MCF 10A (cell line): ENCODE measurements at regions of chr10 and their contacts with region 1.

Region 1: DNA sequence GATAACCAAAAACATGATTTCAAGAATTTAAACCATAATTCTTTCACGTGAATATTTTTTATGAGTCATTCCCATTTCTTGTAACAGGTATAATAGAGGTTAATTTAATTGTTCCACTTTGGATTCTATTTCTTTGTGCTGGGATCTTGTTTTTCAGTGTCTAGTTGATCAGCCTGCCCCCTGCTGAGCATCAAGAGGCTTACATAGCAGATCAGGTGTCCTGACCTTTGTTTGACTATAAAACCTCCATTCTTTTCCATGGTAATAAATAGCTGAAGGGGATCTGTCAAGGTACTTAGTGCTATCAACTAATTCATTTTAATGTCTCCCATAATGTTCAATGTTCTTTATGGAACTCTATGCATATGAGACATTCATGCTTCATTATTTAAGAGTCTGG is 4.9 kb downstream of the COL17A1 start:
- DNase-seq: peak; percentile 65
- H3K4me3 Mint-ChIP-seq: peak overlapping the region; percentile 83
- H3K27ac Mint-ChIP-seq: no peak overlapping the region
- H3K4me1 Mint-ChIP-seq: peaks cover 24% of the 10 kb centered on the region
- H3K27me3 Mint-ChIP-seq: no peaks in the 10 kb centered on the region
- CTCF ChIP-seq: peak; percentile 45

Region 2: DNA sequence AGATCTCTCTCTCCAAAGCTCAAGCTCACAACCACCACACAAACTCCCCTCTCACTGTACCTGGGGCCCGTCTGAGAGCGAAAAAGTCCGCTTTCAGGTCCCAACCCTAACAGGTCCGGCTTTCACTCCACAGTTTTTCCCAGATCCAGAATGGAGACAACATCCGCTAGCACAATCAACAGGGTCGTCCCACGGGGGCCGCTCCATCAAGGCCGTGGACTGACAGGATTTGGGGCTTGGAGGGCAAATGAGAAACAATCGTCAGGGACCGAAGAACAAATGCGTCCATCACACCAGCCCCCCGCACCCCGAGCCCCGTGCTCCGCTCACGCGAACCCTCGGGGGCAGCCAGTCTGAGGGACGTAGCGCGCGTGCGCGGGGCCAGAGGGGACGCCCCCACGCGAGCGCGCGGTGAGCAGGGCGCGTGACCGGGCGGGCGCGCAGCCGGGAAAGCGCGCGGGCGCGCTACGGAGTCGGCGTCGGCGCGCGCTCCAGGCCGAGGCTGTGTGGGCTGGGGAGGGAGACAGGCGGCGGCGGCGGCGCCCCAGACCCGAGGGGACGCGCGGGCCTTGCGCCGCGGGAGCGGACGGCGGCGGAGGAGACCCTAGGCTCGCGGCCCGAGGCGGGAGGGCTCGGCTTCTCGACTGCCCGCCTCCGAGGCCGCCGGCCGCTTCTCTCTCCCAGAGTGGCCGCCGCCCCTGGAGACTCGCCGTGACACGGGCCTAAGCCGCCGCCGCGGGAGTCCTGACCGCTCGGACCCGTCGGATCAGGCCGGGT is 113.9 kb before region 1 on chr10 and contains the start of gene SLK:
- CTCF ChIA-PET with region 1: no interaction called
- POLR2A ChIA-PET with region 1: interaction called, 35 read pairs
- intact Hi-C with region 1: no loop called
- DNase-seq: peak; percentile 75
- H3K4me3 Mint-ChIP-seq: peak within 1 kb of the TSS; percentile 89
- H3K27ac Mint-ChIP-seq: peak within 1 kb of the TSS; percentile 96
- H3K4me1 Mint-ChIP-seq: no peaks in the 10 kb centered on the region
- H3K27me3 Mint-ChIP-seq: no peaks in the 10 kb centered on the region
- CTCF ChIP-seq: no peak
- total RNA-seq, gene SLK: 57.3 and 71.9 TPM in 2 replicates

Region 3: GRCh38 chr10:104054430-104054829 is 26.3 kb before region 1 on chr10:
- CTCF ChIA-PET with region 1: interaction called, 6 read pairs
- POLR2A ChIA-PET with region 1: interaction called, 29 read pairs
- intact Hi-C with region 1: loop called (anchors 5 kb)
- DNase-seq: peak; percentile 73
- H3K4me3 Mint-ChIP-seq: no peak overlapping the region
- H3K27ac Mint-ChIP-seq: peak overlapping the region; percentile 84
- H3K4me1 Mint-ChIP-seq: peaks cover 37% of the 10 kb centered on the region
- H3K27me3 Mint-ChIP-seq: no peaks in the 10 kb centered on the region
- CTCF ChIP-seq: no peak

Region 4: GRCh38 chr10:104092749-104093148 is 12.0 kb after region 1 on chr10:
- CTCF ChIA-PET with region 1: interaction called, 6 read pairs
- POLR2A ChIA-PET with region 1: interaction called, 26 read pairs
- intact Hi-C with region 1: no loop called
- DNase-seq: no peak
- H3K4me3 Mint-ChIP-seq: no peak overlapping the region
- H3K27ac Mint-ChIP-seq: no peak overlapping the region
- H3K4me1 Mint-ChIP-seq: peaks cover 14% of the 10 kb centered on the region
- H3K27me3 Mint-ChIP-seq: no peaks in the 10 kb centered on the region
- CTCF ChIP-seq: no peak

Region 5: DNA sequence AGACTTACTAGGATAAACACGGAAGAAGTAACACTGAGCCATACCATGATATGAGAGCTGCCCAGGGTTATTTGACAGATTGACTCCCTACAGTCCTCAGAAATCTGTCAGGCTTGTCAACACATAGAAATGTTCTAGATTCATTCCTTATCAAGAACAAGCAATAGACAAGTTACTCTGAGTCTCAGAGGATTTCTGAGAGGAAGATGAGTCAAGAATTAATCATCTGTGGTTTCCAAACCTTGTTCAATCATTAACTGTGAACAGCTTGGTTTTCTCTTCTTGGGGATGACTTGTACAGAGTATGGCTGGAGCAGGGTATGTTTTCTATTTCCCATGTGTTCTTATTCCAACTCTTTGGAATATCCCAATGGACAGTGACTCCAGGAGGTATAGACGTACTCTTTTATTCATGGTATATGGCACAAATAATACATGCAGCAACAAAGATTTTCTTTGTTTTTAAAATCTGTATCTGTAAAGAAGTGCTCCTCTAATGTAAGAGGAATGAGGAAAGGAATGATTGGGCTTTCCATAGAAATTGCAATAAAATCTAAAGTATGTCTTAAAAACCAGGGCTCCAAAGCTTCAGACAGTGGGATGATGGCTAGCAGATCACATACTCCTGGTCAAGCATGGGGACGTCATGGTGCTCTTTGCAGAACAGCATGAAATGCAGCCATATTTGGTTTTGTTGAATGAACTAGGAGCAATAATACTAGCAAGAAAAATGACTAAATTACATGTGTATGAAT is 29.3 kb after region 1 on chr10:
- CTCF ChIA-PET with region 1: interaction called, 8 read pairs
- POLR2A ChIA-PET with region 1: interaction called, 1,749 read pairs
- intact Hi-C with region 1: no loop called
- DNase-seq: peak; percentile 70
- H3K4me3 Mint-ChIP-seq: no peak overlapping the region
- H3K27ac Mint-ChIP-seq: peak overlapping the region; percentile 87
- H3K4me1 Mint-ChIP-seq: peaks cover 11% of the 10 kb centered on the region
- H3K27me3 Mint-ChIP-seq: no peaks in the 10 kb centered on the region
- CTCF ChIP-seq: no peak